ENCODE measurements at regions of chr10 and their contacts with region 1.

Region 1: GRCh38 chr10:87094373-87095235 is at the starts of genes GLUD1 and SHLD2:
- DNase-seq: peak; percentile 67
- H3K4me3 ChIP-seq: peak within 1 kb of the TSS; percentile 73 to 92 (median 82)
- H3K27ac ChIP-seq: peak within 1 kb of the TSS; percentile 98 to 100 (median 100)
- H3K4me1 ChIP-seq: peaks cover 15 to 57% (median 20%) of the 10 kb centered on the region in 3 donors
- H3K27me3 ChIP-seq: no peaks in the 10 kb centered on the region
- CTCF ChIP-seq: peak in 1 of 6 experiments; percentile 7
- POLR2A ChIP-seq: peak in 3 of 4 donors; percentile 33 to 85 (median 68)
- total RNA-seq, gene GLUD1: 114 to 204 (median 130) TPM
- total RNA-seq, gene SHLD2: 12.7 to 31.7 (median 21.5) TPM

Region 2: GRCh38 chr10:86888585-86889381 is 205.8 kb before region 1 on chr10:
- intact Hi-C with region 1: no loop called
- DNase-seq: no peak
- H3K4me3 ChIP-seq: no peak overlapping the region
- H3K27ac ChIP-seq: peak overlapping the region in 2 of 4 donors; percentile 23 to 24
- H3K4me1 ChIP-seq: peaks cover 0 to 13% (median 0%) of the 10 kb centered on the region in 3 donors
- H3K27me3 ChIP-seq: no peaks in the 10 kb centered on the region
- CTCF ChIP-seq: no peak
- POLR2A ChIP-seq: no peak

Region 3: GRCh38 chr10:86971232-86971991 is 123.2 kb before region 1 on chr10:
- intact Hi-C with region 1: loop called (anchors 5 kb)
- DNase-seq: peak; percentile 85
- H3K4me3 ChIP-seq: peak overlapping the region; percentile 49 to 75 (median 63)
- H3K27ac ChIP-seq: peak overlapping the region; percentile 96 to 99 (median 97)
- H3K4me1 ChIP-seq: peaks cover 45 to 91% (median 58%) of the 10 kb centered on the region in 3 donors
- H3K27me3 ChIP-seq: no peaks in the 10 kb centered on the region
- CTCF ChIP-seq: peak in 5 of 6 experiments; percentile 14 to 50 (median 19)
- POLR2A ChIP-seq: no peak

Measured in esophagus squamous epithelium (tissue), 5 donors.